ENCODE measurements at regions of chr6 and their contacts with region 1.

Region 1: DNA sequence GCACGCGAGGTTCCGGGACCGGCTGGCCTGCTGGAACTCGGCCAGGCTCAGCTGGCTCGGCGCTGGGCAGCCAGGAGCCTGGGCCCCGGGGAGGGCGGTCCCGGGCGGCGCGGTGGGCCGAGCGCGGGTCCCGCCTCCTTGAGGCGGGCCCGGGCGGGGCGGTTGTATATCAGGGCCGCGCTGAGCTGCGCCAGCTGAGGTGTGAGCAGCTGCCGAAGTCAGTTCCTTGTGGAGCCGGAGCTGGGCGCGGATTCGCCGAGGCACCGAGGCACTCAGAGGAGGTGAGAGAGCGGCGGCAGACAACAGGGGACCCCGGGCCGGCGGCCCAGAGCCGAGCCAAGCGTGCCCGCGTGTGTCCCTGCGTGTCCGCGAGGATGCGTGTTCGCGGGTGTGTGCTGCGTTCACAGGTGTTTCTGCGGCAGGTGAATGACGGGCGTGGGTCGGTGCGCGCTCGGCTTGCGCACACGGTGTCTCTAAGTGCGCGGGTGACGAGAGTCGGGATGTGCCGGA is at the start of gene CDKN1A:
- DNase-seq: peak; percentile 92
- H3K4me3 ChIP-seq: peak within 1 kb of the TSS; percentile 72
- H3K27ac ChIP-seq: peak within 1 kb of the TSS; percentile 70
- H3K4me1 ChIP-seq: peaks cover 28% of the 10 kb centered on the region
- H3K27me3 ChIP-seq: no peaks in the 10 kb centered on the region
- CTCF ChIP-seq: no peak
- total RNA-seq, gene CDKN1A: 30.4 and 33.6 TPM in 2 replicates

Region 2: GRCh38 chr6:36235309-36235708 is 443.3 kb before region 1 on chr6:
- CTCF ChIA-PET with region 1: no interaction called
- POLR2A ChIA-PET with region 1: no interaction called
- intact Hi-C with region 1: no loop called
- DNase-seq: no peak
- H3K4me3 ChIP-seq: no peak overlapping the region
- H3K27ac ChIP-seq: no peak overlapping the region
- H3K4me1 ChIP-seq: no peaks in the 10 kb centered on the region
- H3K27me3 ChIP-seq: no peaks in the 10 kb centered on the region
- CTCF ChIP-seq: no peak

Region 3: DNA sequence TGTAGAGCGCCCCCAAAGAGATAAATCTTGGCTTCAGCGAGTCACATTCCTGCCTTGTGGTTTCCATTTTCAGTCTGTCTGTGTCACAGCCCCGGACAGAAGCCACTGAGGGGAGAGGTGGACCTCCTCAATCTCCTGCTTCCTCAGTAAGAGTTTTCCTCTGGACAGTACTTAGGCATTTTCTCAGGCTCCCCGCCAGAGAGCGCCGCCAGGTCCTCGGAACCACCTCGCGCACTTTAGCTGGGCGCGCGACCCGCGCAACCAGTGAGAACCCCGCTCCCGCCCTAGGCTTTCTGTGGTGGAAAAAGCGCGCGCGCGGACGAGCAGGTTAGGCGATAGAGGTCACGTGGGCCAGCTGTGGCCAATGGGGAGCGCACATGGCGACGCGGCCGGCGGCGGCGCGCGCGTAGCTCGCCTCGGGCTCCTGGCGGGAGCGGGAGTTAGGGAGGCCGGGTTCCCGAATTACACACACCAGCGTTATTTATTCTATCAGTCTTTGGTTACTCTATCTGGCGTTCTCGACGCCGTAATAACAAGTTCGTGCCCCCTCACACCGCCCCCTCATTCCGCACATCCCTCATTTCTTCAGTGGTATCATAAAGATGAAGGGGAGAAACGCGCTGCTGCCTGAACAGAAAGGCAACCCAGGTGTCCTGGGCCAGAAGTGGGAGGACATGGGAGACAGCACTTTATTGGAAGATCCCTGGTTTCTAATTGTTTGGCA is 255.3 kb before region 1 on chr6:
- CTCF ChIA-PET with region 1: no interaction called
- POLR2A ChIA-PET with region 1: no interaction called
- intact Hi-C with region 1: loop called (anchors 10 kb)
- DNase-seq: peak; percentile 99
- H3K4me3 ChIP-seq: peak overlapping the region; percentile 42
- H3K27ac ChIP-seq: peak overlapping the region; percentile 55
- H3K4me1 ChIP-seq: peaks cover 9% of the 10 kb centered on the region
- H3K27me3 ChIP-seq: no peaks in the 10 kb centered on the region
- CTCF ChIP-seq: peak; percentile 62

Region 4: DNA sequence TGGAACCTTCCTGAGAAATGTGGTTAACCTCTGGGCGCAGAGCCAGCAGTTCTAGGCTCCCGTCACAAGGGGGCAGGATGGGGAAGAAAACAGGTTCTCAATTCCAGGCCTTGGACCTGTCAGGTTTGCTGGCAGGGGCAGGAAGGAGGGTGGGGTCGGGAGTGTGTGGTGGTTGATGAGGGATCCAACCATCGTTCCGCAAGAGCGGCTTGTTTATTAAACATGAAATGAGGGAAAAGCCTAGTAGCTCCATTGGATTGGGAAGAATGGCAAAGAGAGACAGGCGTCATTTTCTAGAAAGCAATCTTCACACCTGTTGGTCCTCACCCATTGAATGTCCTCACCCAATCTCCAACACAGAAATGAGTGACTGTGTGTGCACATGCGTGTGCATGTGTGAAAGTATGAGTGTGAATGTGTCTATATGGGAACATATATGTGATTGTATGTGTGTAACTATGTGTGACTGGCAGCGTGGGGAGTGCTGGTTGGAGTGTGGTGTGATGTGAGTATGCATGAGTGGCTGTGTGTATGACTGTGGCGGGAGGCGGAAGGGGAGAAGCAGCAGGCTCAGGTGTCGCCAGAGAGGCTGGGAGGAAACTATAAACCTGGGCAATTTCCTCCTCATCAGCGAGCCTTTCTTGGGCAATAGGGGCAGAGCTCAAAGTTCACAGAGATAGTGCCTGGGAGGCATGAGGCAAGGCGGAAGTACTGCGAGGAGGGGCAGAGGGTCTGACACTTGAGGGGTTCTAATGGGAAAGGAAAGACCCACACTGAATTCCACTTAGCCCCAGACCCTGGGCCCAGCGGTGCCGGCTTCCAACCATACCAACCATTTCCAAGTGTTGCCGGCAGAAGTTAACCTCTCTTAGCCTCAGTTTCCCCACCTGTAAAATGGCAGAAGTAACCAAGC is 54.8 kb before region 1 on chr6:
- CTCF ChIA-PET with region 1: no interaction called
- POLR2A ChIA-PET with region 1: no interaction called
- intact Hi-C with region 1: loop called (anchors 1 kb)
- DNase-seq: peak; percentile 88
- H3K4me3 ChIP-seq: no peak overlapping the region
- H3K27ac ChIP-seq: no peak overlapping the region
- H3K4me1 ChIP-seq: no peaks in the 10 kb centered on the region
- H3K27me3 ChIP-seq: no peaks in the 10 kb centered on the region
- CTCF ChIP-seq: peak; percentile 93

Measured in A673 (cell line).